ENCODE measurements at regions of chr21 and their contacts with region 1.

Region 1: DNA sequence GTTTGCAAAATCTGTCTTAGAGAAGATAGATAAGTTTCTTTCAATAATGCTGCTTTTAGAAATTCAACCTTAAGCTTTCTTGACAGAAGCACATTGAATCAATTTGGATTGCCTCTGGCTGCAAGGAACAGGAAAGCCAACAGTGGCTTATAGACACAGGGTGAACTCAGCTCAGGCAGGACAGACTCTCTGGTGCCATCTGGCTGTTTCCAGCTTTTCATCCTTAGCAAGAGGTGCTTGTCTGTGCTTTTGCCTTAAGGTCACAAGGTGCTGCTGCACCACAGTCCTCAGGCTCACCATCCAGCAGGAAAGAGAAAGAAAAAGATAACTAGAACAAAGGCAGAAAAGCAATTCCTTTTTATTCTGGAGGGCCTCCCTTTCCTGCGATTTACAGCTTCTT is 93.7 kb upstream of the ETS2 start:
- DNase-seq: peak in 1 of 5 donors; percentile 25
- H3K4me3 ChIP-seq: no peak overlapping the region
- H3K27ac ChIP-seq: no peak overlapping the region
- H3K4me1 ChIP-seq: no peaks in the 10 kb centered on the region
- H3K27me3 ChIP-seq: no peaks in the 10 kb centered on the region
- CTCF ChIP-seq: no peak
- EP300 ChIP-seq: no peak
- POLR2A ChIP-seq: no peak

Region 2: DNA sequence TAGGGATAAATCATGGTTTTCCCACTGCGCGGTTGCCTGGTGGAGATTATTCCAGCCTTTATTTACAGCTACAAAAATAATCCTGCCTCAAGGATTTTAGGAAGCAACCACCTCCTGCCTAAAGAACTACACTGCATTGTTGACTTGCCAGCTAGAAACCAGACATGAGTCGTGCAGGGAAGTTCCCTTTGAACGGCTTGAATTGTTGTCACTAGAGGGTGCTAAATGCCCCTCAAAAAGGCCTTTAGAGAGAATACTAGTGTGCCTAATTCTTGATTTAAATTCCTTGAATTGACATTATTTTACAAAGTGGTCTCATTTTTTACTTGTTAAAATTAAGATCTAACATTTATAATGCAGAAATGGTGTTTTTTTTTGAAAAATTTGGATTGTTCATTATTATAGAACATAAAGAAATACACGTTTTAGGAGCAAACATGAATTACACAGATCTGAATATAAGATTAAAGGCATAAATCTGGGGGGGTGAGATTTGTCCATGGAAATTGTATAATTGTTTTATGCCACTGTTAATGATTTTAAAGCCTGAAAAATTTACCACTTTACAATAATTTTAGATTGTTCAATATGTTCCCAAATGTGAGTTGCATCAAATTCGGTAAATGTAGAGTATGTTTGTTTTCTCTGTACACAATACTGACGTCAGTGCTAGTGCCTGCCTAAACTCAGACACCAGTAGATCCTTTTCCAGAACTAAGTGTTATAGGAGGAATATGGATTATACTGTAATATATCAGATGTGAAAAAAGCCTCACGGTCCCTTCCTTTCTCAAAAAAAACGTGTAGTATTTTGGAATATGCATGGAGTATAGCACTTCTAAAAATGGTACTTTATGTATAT is 206.2 kb before region 1 on chr21:
- intact Hi-C with region 1: loop called in 2 of 4 experiments (anchors 10 kb)
- DNase-seq: peak in 2 of 5 donors; percentile 17 to 45
- H3K4me3 ChIP-seq: no peak overlapping the region
- H3K27ac ChIP-seq: no peak overlapping the region
- H3K4me1 ChIP-seq: no peaks in the 10 kb centered on the region
- H3K27me3 ChIP-seq: no peaks in the 10 kb centered on the region
- CTCF ChIP-seq: peak in 2 of 3 donors; percentile 24 to 43
- EP300 ChIP-seq: no peak
- POLR2A ChIP-seq: no peak

Region 3: GRCh38 chr21:38511662-38512243 is 200.3 kb before region 1 on chr21:
- intact Hi-C with region 1: loop called in 2 of 4 experiments (anchors 10 kb)
- DNase-seq: no peak
- H3K4me3 ChIP-seq: no peak overlapping the region
- H3K27ac ChIP-seq: no peak overlapping the region
- H3K4me1 ChIP-seq: no peaks in the 10 kb centered on the region
- H3K27me3 ChIP-seq: no peaks in the 10 kb centered on the region
- CTCF ChIP-seq: no peak
- EP300 ChIP-seq: no peak
- POLR2A ChIP-seq: no peak

Region 4: GRCh38 chr21:38525454-38525853 is 186.6 kb before region 1 on chr21:
- intact Hi-C with region 1: loop called in 1 of 4 experiments (anchors 10 kb)
- DNase-seq: no peak
- H3K4me3 ChIP-seq: no peak overlapping the region
- H3K27ac ChIP-seq: no peak overlapping the region
- H3K4me1 ChIP-seq: no peaks in the 10 kb centered on the region
- H3K27me3 ChIP-seq: no peaks in the 10 kb centered on the region
- CTCF ChIP-seq: no peak
- EP300 ChIP-seq: no peak
- POLR2A ChIP-seq: no peak

Region 5: GRCh38 chr21:38797470-38797869 is 85.4 kb after region 1 on chr21:
- intact Hi-C with region 1: no loop called
- DNase-seq: no peak
- H3K4me3 ChIP-seq: no peak overlapping the region
- H3K27ac ChIP-seq: no peak overlapping the region
- H3K4me1 ChIP-seq: no peaks in the 10 kb centered on the region
- H3K27me3 ChIP-seq: no peaks in the 10 kb centered on the region
- CTCF ChIP-seq: no peak
- EP300 ChIP-seq: no peak
- POLR2A ChIP-seq: no peak

Measured in ovary (tissue), 10 donors.